Activated CD4-positive, alpha-beta memory T cell treated with anti-CD3 and anti-CD28 coated beads, Interleukin-2, amount 10 ng/mL, durations not matched to agents 7 days and 5 days (primary cell): ENCODE measurements at regions of chr11 and their contacts with region 1.

Region 1: GRCh38 chr11:62591448-62592145 is at the start of gene TUT1:
- DNase-seq: peak; percentile 98
- H3K4me3 Mint-ChIP-seq: peak within 1 kb of the TSS; percentile 99
- H3K27ac Mint-ChIP-seq: peak within 1 kb of the TSS; percentile 96
- H3K4me1 Mint-ChIP-seq: peaks cover 65% of the 10 kb centered on the region
- H3K27me3 Mint-ChIP-seq: no peaks in the 10 kb centered on the region
- total RNA-seq, gene TUT1: 23.7 to 25.2 TPM

Region 2: GRCh38 chr11:61971248-61972111 is 620.1 kb before region 1 on chr11:
- CTCF ChIA-PET with region 1: no interaction called
- POLR2A ChIA-PET with region 1: no interaction called
- DNase-seq: peak; percentile 69
- H3K4me3 Mint-ChIP-seq: no peak overlapping the region
- H3K27ac Mint-ChIP-seq: peak overlapping the region; percentile 64
- H3K4me1 Mint-ChIP-seq: peaks cover 59% of the 10 kb centered on the region
- H3K27me3 Mint-ChIP-seq: no peaks in the 10 kb centered on the region

Region 3: GRCh38 chr11:62400760-62401159 is 190.8 kb before region 1 on chr11:
- CTCF ChIA-PET with region 1: interaction called, 16 read pairs
- POLR2A ChIA-PET with region 1: interaction called, 11 read pairs
- DNase-seq: no peak
- H3K4me3 Mint-ChIP-seq: no peak overlapping the region
- H3K27ac Mint-ChIP-seq: no peak overlapping the region
- H3K4me1 Mint-ChIP-seq: peaks cover 23% of the 10 kb centered on the region
- H3K27me3 Mint-ChIP-seq: peaks cover 3% of the 10 kb centered on the region

Region 4: GRCh38 chr11:62567018-62567633 is 24.5 kb before region 1 on chr11:
- CTCF ChIA-PET with region 1: interaction called, 5 read pairs
- POLR2A ChIA-PET with region 1: interaction called, 129 read pairs
- DNase-seq: no peak
- H3K4me3 Mint-ChIP-seq: peak overlapping the region; percentile 9
- H3K27ac Mint-ChIP-seq: peak overlapping the region; percentile 73
- H3K4me1 Mint-ChIP-seq: peaks cover 63% of the 10 kb centered on the region
- H3K27me3 Mint-ChIP-seq: no peaks in the 10 kb centered on the region

Region 5: GRCh38 chr11:62645956-62646824 is 54.6 kb after region 1 on chr11 and contains the start of gene GANAB:
- CTCF ChIA-PET with region 1: interaction called, 9 read pairs
- POLR2A ChIA-PET with region 1: interaction called, 25 read pairs
- DNase-seq: peak; percentile 99
- H3K4me3 Mint-ChIP-seq: peak within 1 kb of the TSS; percentile 99
- H3K27ac Mint-ChIP-seq: peak within 1 kb of the TSS; percentile 94
- H3K4me1 Mint-ChIP-seq: peaks cover 47% of the 10 kb centered on the region
- H3K27me3 Mint-ChIP-seq: no peaks in the 10 kb centered on the region
- total RNA-seq, gene GANAB: 278 to 284 TPM

Region 6: DNA sequence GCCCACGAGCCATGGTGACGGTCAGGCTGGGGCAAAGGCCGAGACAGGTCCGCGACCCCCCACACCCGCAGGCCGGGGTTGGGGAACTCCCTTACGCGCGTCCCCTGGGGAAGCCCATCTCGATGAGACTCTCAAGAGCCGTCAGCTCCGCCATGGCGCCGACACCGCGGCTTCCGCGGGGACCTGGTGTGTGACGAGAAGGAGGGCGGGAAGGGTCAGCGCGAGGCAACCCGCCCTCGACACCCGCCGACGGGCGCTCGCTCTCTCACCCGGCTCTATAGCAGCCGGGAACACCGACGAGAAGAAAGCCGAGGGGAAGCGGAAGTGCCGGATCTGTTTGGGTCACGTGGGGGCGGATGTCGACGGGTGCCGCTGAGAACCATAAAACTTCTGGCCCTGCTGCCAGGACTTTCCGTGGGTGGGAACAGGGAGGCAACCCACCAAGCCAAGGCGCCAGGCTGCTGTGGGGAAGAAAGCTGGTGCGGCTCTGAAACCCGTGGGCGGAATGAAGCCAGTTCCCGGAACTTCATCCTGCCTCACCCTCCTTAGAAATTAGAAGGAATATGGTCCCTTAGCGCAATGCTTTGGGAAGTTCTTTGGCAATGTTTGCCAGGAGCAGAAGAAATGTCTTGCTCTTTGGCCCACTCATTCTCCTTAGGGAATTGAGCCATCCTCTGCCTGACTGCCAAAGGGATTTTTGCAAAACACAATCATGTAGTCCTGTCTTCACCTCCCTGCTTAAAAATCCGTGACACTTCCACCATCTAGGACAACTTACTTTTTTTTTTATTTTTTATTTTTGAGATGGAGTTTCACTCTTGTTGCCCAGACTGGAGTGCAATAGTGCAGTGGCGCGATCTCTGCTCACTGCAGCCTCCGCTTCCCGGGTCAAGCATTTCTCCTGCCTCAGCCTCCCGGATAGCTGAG is 87.4 kb after region 1 on chr11 and contains the start of gene UBXN1:
- CTCF ChIA-PET with region 1: interaction called, 4 read pairs
- POLR2A ChIA-PET with region 1: interaction called, 12 read pairs
- DNase-seq: peak; percentile 87
- H3K4me3 Mint-ChIP-seq: peak within 1 kb of the TSS; percentile 88
- H3K27ac Mint-ChIP-seq: peak within 1 kb of the TSS; percentile 78
- H3K4me1 Mint-ChIP-seq: peaks cover 40% of the 10 kb centered on the region
- H3K27me3 Mint-ChIP-seq: no peaks in the 10 kb centered on the region
- total RNA-seq, gene UBXN1: 135 to 139 TPM

Region 7: GRCh38 chr11:62753736-62754603 is 162.4 kb after region 1 on chr11 and contains the start of gene ZBTB3:
- CTCF ChIA-PET with region 1: interaction called, 12 read pairs
- POLR2A ChIA-PET with region 1: interaction called, 9 read pairs
- DNase-seq: peak; percentile 97
- H3K4me3 Mint-ChIP-seq: peak within 1 kb of the TSS; percentile 95
- H3K27ac Mint-ChIP-seq: peak within 1 kb of the TSS; percentile 93
- H3K4me1 Mint-ChIP-seq: peaks cover 33% of the 10 kb centered on the region
- H3K27me3 Mint-ChIP-seq: no peaks in the 10 kb centered on the region
- total RNA-seq, gene ZBTB3: 13.3 to 13.4 TPM